ENCODE measurements at regions of chr13 and their contacts with region 1.

Region 1: DNA sequence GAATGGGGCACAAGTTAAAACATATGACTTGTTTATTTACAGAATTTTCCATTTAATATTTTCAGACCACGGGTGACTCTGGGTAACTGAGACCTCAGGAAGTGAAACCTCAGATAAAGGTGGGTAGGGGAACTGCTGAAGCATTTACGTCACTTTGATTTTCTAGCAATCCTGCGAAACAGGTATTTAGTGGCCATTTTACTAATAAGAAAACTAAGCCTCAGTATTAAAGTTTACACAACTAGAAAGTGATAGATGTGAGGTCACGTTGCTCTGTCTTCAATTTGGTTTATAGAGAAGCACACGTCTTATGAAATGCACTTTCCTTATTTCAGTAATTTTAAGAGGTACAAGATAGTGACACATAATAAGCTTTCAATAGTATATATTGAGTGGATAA is 402.8 kb downstream of the FGF9 start:
- DNase-seq: no peak
- H3K4me3 Mint-ChIP-seq: peak overlapping the region; percentile 15
- H3K27ac Mint-ChIP-seq: peak overlapping the region; percentile 58
- H3K4me1 Mint-ChIP-seq: peaks cover 42% of the 10 kb centered on the region
- H3K27me3 Mint-ChIP-seq: no peaks in the 10 kb centered on the region

Region 2: DNA sequence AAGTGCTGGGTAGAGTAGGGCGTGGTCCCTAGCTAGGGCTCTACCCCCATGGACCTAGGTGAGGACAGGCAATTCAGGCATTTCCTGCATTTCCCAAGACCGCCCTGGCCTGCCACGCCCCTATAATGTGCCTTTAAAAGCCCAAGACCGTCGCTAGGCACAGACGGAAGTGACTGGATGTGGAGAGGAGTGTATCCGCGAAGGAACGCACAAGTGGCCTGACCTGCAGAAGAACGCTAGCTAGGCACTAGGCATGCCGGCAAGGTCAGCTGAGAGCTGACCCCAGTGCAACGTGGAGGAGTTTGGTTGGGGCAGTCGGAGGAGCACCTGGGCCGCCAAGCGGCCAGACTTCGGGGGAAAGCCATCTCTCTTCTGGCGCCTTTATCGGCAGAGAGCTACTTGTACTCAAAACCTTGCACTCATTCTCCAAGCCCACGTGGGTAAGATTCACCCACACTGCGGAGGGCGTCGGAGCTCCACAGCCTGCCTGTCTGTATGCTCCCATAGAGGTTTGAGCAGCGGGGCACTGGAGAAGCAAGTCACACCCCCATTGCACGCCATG is 32.8 kb before region 1 on chr13:
- intact Hi-C with region 1: loop called (anchors 2 kb)
- DNase-seq: peak; percentile 58
- H3K4me3 Mint-ChIP-seq: peak overlapping the region; percentile 80
- H3K27ac Mint-ChIP-seq: peak overlapping the region; percentile 76
- H3K4me1 Mint-ChIP-seq: peaks cover 15% of the 10 kb centered on the region
- H3K27me3 Mint-ChIP-seq: no peaks in the 10 kb centered on the region

Region 3: GRCh38 chr13:22114630-22115311 is 41.1 kb after region 1 on chr13:
- intact Hi-C with region 1: loop called (anchors 1 kb)
- DNase-seq: peak; percentile 88
- H3K4me3 Mint-ChIP-seq: peak overlapping the region; percentile 53
- H3K27ac Mint-ChIP-seq: peak overlapping the region; percentile 94
- H3K4me1 Mint-ChIP-seq: peaks cover 55% of the 10 kb centered on the region
- H3K27me3 Mint-ChIP-seq: no peaks in the 10 kb centered on the region

Region 4: DNA sequence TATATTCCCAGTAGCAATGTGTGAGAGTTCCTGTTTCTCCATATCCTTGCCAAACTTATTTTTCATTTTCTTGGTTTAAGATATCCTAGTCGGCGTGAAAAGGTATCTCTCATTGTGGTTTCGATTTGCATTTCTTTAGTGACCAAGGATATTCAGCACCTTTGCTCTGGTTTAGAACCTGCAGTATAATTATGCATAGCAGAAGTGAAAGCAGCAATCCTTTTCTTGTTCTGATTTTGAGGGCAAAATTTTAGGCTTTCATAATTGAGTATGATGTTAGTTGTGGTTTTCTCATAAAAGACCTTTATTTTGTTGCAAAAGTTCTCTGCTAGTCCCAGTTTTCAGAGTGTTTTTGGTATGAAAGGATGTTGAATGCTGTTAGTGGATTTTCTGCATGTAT is 88.2 kb after region 1 on chr13:
- intact Hi-C with region 1: loop called (anchors 1 kb)
- DNase-seq: no peak
- H3K4me3 Mint-ChIP-seq: no peak overlapping the region
- H3K27ac Mint-ChIP-seq: no peak overlapping the region
- H3K4me1 Mint-ChIP-seq: peaks cover 15% of the 10 kb centered on the region
- H3K27me3 Mint-ChIP-seq: peaks cover 1% of the 10 kb centered on the region

Region 5: GRCh38 chr13:22252281-22252830 is 178.6 kb after region 1 on chr13:
- intact Hi-C with region 1: no loop called
- DNase-seq: no peak
- H3K4me3 Mint-ChIP-seq: no peak overlapping the region
- H3K27ac Mint-ChIP-seq: no peak overlapping the region
- H3K4me1 Mint-ChIP-seq: no peaks in the 10 kb centered on the region
- H3K27me3 Mint-ChIP-seq: no peaks in the 10 kb centered on the region